ENCODE measurements at regions of chr17 and their contacts with region 1.

Region 1: DNA sequence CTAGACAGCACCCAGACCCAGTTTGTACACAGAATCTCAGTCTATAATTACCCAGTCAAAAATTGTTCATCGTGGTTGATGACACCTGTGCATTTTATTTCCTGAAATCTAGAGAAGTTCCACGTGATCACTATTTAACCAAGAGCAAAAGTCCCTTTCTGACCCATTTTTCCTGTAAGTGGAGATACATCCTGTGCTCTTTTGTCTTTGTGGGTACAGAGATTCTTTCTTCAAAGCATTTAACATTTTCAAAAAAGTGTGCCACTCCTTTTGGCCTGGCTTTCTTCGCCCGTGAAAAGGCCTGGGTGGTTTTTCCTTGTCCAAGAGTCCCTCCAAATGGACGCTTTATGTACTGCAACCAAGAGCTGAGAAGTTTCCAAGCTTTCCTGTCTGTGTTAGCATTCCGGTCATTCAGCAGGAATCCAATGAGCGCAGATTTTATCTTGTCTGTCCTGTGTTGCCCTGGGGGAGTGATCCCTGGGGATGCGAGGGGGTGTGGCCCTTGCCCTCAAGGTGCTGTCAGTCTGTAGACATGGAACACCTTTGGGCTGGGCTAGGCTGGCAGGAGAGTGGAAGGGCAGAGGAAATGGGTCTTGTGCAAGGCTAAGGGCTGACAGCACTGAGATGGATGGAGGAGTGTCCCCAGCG is 161.1 kb upstream of the CACNG5 start:
- DNase-seq: peak; percentile 42 to 66
- H3K4me3 ChIP-seq: no peak overlapping the region
- H3K4me1 ChIP-seq: peaks cover 4% of the 10 kb centered on the region; the same call in 1 of the 2 replicates
- H3K27me3 ChIP-seq: no peaks in the 10 kb centered on the region

Region 2: DNA sequence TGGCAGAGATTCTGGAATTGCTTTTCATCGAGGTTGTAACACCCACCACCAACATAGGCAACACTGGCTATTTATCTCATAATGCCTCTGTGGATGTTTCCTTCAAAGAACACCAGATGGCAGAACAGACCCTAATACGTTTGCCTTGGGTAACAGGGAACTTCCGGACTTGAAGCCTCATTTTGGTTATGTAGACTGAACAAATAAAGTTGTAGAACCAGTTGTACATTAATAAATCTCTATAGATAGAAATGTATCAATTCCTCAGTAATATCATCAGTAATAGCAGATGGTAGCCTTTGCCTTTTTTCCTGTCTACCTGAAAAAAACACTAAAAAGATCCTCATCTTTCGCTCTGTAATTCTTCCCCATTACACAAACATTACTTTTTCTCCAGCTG is 418.7 kb before region 1 on chr17:
- in situ Hi-C with region 1: loop called (anchors 10 kb)
- DNase-seq: peak; percentile 31 to 59
- H3K4me3 ChIP-seq: no peak overlapping the region
- H3K4me1 ChIP-seq: no peaks in the 10 kb centered on the region
- H3K27me3 ChIP-seq: no peaks in the 10 kb centered on the region

Region 3: DNA sequence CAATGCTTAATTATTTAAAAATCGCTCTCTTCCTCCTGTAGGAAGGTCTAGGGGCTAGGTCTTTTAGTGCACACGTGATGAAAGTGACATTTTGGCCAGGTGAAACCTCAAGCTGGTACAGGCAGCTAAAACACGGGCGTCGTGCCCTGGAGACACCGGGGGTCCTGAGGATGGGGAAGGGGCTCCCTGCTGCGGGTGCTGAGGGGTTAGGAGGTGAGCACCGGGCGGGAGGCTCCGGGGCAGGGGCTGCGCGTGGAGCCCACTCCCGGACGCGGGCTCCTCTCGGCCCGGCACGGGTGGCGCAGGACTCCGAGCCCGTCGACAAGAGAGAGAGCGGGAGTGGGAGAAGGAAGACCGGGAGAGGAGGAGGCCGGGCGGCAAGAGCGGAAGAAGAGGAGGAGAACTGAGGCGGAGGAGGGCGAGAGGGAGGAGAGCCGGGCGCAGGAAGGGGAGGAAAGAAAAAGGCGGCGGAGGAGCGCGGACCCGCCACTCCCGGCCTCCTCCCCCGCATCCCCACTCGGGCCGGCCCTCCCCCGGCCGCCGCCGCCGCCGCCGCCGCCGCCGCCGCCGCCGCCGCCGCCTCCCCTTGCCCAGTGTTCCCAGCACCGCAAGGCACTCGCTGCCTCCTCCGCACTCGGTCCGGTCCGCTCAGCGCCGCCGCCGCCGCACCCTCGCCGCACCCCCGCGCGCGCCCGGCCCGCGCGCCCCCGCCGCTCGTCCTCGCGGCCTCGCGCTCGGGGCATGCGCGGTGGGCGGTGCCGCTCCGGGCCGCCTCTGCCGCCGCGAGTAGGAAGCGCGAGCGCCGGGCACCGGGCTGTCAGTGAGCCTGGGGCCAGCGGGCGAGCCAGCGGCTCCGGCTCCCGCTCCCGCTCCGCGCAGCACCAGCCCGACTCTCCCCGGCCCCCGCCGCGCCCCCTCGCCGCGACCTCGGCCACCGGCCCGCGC is 371.7 kb before region 1 on chr17 and contains the start of gene PRKCA:
- in situ Hi-C with region 1: no loop called
- DNase-seq: peak; percentile 47 to 73
- H3K4me3 ChIP-seq: peak within 1 kb of the TSS; percentile 56
- H3K4me1 ChIP-seq: peaks cover 24% of the 10 kb centered on the region
- H3K27me3 ChIP-seq: no peaks in the 10 kb centered on the region; the same call in none of the 2 replicates

Region 4: GRCh38 chr17:66885395-66885794 is 211.6 kb after region 1 on chr17:
- in situ Hi-C with region 1: no loop called
- DNase-seq: no peak
- H3K4me3 ChIP-seq: no peak overlapping the region
- H3K4me1 ChIP-seq: no peaks in the 10 kb centered on the region
- H3K27me3 ChIP-seq: no peaks in the 10 kb centered on the region